ENCODE measurements at regions of chr13 and their contacts with region 1.

Region 1: GRCh38 chr13:99656092-99656745 is 154.9 kb downstream of the TM9SF2 start:
- DNase-seq: peak; percentile 43
- H3K4me3 ChIP-seq: no peak overlapping the region
- H3K27ac ChIP-seq: no peak overlapping the region
- H3K4me1 ChIP-seq: peaks cover 18% of the 10 kb centered on the region
- H3K27me3 ChIP-seq: no peaks in the 10 kb centered on the region
- CTCF ChIP-seq: peak; percentile 90 to 91

Region 2: DNA sequence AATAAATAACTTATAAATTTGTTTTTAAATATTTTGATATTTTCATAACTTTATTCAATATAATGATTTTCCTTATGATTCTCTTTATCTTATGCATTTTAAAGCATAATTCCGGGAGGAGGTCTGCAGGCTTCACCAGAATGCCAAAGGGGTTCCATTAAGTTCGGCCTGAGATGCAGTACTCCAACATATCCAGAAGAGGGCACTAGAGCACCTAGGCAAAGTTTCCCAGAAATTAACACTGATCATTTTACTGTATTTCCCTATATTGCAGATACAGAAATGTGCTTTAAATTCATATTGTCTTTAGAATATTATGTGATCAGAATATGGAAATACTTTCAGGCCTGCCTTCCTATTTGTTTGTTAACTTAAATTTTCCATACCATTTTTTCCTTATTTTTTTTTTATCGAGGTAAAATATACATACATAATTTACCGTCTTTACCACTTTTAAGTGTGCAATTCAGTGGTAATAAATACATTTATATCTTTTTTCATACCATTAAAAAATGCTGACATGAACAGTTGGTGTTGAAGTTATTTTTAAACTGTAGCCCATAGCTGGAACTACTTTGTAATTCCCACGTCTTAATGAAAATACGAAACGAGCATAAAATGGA is 213.8 kb before region 1 on chr13:
- CTCF ChIA-PET with region 1: no interaction called
- dilution Hi-C with region 1: no loop called
- in situ Hi-C with region 1: no loop called
- intact Hi-C with region 1: loop called (anchors 1 kb)
- DNase-seq: peak; percentile 16
- H3K4me3 ChIP-seq: no peak overlapping the region
- H3K27ac ChIP-seq: no peak overlapping the region
- H3K4me1 ChIP-seq: no peaks in the 10 kb centered on the region
- H3K27me3 ChIP-seq: no peaks in the 10 kb centered on the region
- CTCF ChIP-seq: peak; percentile 85 to 98

Region 3: DNA sequence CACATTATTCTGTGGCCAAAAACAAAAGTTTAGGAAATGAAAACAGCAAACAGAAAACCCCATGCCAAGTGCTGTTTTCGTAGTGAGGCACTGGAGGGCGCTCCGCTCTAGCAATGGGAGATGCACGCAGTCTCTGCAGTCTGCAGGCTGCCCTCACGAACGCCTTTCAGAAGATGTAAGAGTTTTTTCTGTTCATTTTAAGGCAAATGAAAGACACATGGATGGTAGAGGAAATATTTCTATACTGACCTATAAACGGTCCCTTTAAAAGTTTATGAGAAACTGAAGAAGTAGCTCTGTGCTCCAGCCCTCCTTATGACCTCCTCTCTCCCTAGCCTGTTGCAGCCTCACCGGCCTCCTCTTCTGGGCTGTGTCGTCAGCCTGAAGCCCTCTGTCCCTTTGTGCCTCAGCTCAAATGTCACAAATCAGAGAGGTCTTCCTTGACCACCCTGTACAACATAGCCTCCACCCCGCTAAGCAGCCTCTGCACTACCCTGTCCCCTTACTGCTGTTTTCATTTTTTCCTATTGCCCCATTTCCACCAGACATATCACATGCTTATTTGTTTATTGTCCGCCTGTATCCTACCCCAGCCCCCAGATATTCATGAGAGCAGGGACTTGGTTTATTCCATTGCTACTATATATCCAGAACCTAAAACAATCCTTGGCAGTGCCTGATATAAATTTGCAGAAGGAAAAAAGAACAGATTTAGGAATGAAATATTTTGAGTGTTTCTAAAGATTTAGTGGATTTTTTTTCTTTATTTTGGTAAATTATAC is 38.6 kb before region 1 on chr13:
- CTCF ChIA-PET with region 1: interaction called, 6 read pairs
- dilution Hi-C with region 1: no loop called
- in situ Hi-C with region 1: no loop called
- intact Hi-C with region 1: loop called (anchors 1 kb)
- DNase-seq: no peak
- H3K4me3 ChIP-seq: no peak overlapping the region
- H3K27ac ChIP-seq: no peak overlapping the region
- H3K4me1 ChIP-seq: peaks cover 22% of the 10 kb centered on the region
- H3K27me3 ChIP-seq: no peaks in the 10 kb centered on the region
- CTCF ChIP-seq: peak; percentile 73 to 79

Region 4: GRCh38 chr13:99695857-99696256 is 39.6 kb after region 1 on chr13:
- CTCF ChIA-PET with region 1: no interaction called
- dilution Hi-C with region 1: no loop called
- in situ Hi-C with region 1: no loop called
- intact Hi-C with region 1: no loop called
- DNase-seq: no peak
- H3K4me3 ChIP-seq: no peak overlapping the region
- H3K27ac ChIP-seq: no peak overlapping the region
- H3K4me1 ChIP-seq: no peaks in the 10 kb centered on the region
- H3K27me3 ChIP-seq: no peaks in the 10 kb centered on the region
- CTCF ChIP-seq: no peak

Region 5: GRCh38 chr13:99916366-99917103 is 260.3 kb after region 1 on chr13:
- CTCF ChIA-PET with region 1: no interaction called
- dilution Hi-C with region 1: no loop called
- in situ Hi-C with region 1: no loop called
- intact Hi-C with region 1: loop called (anchors 1 kb)
- DNase-seq: peak; percentile 66
- H3K4me3 ChIP-seq: no peak overlapping the region
- H3K27ac ChIP-seq: no peak overlapping the region
- H3K4me1 ChIP-seq: no peaks in the 10 kb centered on the region
- H3K27me3 ChIP-seq: no peaks in the 10 kb centered on the region
- CTCF ChIP-seq: peak; percentile 98 to 99

Region 6: DNA sequence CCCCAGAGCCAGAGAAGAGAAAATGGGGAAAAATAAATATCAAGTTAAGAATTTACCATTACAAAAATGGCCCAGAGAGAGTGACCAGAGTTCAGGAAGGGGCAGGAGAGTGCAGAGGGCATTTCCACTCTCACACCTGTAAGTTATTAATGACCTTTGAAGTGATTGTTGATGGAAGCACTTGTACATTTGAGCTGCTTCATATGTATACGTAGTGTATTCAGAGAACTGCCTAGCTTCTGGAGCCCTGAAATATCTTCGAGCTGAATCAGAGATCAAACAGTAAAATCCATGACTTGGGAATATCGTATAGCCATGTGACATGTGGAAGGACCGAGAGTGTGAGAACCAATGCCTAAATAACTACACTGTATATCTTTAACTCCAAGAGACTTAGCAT is 383.5 kb after region 1 on chr13:
- CTCF ChIA-PET with region 1: interaction called, 7 read pairs
- dilution Hi-C with region 1: no loop called
- in situ Hi-C with region 1: no loop called
- intact Hi-C with region 1: loop called (anchors 5 kb)
- DNase-seq: no peak
- H3K4me3 ChIP-seq: no peak overlapping the region
- H3K27ac ChIP-seq: no peak overlapping the region
- H3K4me1 ChIP-seq: no peaks in the 10 kb centered on the region
- H3K27me3 ChIP-seq: no peaks in the 10 kb centered on the region
- CTCF ChIP-seq: no peak

Region 7: GRCh38 chr13:100235311-100235901 is 579.2 kb after region 1 on chr13:
- CTCF ChIA-PET with region 1: interaction called, 3 read pairs
- dilution Hi-C with region 1: no loop called
- in situ Hi-C with region 1: loop called in 1 of 2 experiments (anchors 25 kb)
- intact Hi-C with region 1: loop called (anchors 1 kb)
- DNase-seq: peak; percentile 28
- H3K4me3 ChIP-seq: no peak overlapping the region
- H3K27ac ChIP-seq: no peak overlapping the region
- H3K4me1 ChIP-seq: peaks cover 2% of the 10 kb centered on the region
- H3K27me3 ChIP-seq: no peaks in the 10 kb centered on the region
- CTCF ChIP-seq: peak; percentile 43 to 58

Region 8: GRCh38 chr13:101098873-101099272 is 1442.7 kb after region 1 on chr13:
- CTCF ChIA-PET with region 1: no interaction called
- dilution Hi-C with region 1: no loop called
- in situ Hi-C with region 1: no loop called
- intact Hi-C with region 1: loop called (anchors 5 kb)
- DNase-seq: no peak
- H3K4me3 ChIP-seq: no peak overlapping the region
- H3K27ac ChIP-seq: no peak overlapping the region
- H3K4me1 ChIP-seq: no peaks in the 10 kb centered on the region
- H3K27me3 ChIP-seq: no peaks in the 10 kb centered on the region
- CTCF ChIP-seq: no peak